ENCODE measurements at regions of chr14 and their contacts with region 1.

Region 1: DNA sequence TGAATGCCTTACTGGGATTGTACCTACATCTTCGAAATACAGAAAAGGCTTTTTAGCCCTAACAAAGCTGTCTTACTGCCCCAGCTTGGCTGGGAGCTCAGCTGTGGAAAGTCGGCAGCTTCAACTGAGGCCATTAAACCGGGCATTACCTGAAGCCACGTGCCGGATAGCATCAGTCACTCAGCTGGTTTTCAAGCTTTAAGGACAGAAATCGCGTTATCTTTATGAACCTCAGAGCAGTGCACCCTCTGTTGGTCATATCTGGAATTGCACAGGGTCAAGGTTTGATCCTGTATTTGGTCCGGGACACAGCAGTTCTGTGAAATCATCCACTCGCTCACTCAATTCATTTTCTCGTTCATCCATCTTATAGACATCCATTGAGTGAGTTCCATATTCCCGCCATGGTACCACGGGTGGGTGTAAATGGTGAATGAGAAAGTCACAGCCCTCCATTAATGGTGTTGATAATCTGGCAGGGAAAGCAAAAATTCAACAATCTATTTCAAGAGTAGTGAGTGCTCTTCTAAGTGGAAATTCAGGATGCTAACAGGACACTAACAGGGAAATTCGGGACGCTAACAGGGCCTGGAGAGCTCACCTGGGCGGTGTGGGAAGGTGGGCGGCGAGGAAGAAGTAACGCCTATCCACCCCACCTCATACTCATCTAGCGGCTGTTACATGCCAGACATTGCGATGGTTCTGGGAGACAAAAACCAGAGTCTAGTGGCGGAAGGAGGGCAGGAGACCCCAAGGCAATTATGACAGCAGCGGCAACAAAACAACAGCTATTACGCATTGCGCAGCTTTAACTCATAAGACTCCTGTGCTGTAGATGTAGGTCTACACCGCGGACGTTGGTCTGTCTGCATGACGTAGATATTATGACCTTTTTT is 60.6 kb upstream of the TCL1A start:
- DNase-seq: peak; percentile 47 to 63 (median 58)
- ATAC-seq: peak; percentile 55; the same call in 2 of the 3 replicates
- H3K4me3 ChIP-seq: no peak overlapping the region
- H3K27ac ChIP-seq: no peak overlapping the region
- H3K4me1 ChIP-seq: no peaks in the 10 kb centered on the region; a peak in 1 of 5 replicates
- H3K27me3 ChIP-seq: no peaks in the 10 kb centered on the region
- CTCF ChIP-seq: peak; percentile 63 to 73 (median 69)
- EP300 ChIP-seq: no peak
- POLR2A ChIP-seq: no peak
- RAD21 ChIP-seq: peak; percentile 27 to 54; a peak in 3 of 4 replicates

Region 2: DNA sequence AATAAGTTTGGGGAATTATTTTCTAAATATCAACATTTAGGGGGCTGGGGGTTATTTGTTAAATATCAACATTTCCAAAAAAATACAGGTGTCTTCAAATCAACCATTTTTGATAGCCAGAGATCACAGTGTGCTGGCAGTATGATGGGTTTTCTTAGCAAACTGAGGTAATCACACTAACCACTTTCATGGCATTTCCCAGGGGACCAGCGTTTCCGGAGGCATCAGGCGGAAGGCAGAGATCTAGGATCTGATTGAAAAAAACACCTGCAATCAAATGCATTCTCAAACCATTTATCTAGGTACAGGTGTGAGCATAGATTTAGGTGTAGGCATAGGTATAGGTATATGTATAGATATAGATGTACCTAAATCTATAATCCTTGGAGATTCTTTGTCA is 205.1 kb before region 1 on chr14:
- CTCF ChIA-PET with region 1: interaction called, 3 read pairs
- POLR2A ChIA-PET with region 1: no interaction called
- in situ Hi-C with region 1: loop called (anchors 5 kb)
- intact Hi-C with region 1: no loop called
- DNase-seq: no peak
- ATAC-seq: no peak
- H3K4me3 ChIP-seq: no peak overlapping the region
- H3K27ac ChIP-seq: no peak overlapping the region
- H3K4me1 ChIP-seq: no peaks in the 10 kb centered on the region
- H3K27me3 ChIP-seq: no peaks in the 10 kb centered on the region
- CTCF ChIP-seq: no peak
- EP300 ChIP-seq: no peak
- POLR2A ChIP-seq: no peak
- RAD21 ChIP-seq: no peak

Region 3: DNA sequence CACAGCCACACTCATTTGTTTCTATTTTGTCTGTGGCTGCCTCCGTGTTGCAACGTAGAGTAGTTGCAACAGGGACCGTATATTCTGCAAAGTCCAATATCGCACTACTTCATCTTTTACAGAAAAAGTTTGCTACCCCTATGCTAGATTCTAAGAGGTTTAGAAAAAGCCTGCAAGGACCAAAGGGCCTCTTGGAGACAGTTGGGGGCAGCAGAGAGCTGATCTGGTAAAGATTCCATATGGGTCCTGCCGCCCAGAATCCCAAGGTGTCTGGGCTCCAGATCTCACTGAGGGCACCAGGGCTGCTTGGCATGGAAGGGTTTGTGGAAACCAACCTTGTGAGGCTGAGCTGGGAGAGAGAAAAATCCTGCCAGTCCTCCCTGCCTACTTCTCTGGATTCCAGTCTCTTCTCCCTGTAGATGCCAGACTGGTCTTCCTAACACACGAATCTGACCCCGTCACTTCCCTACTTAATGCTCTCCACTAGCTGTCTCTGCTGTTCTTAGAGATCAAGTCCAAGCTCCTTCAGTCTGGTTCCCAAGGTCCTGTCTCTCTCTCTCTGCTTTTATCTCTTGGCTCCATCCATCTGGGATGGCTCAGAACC is 165.0 kb before region 1 on chr14:
- CTCF ChIA-PET with region 1: interaction called, 3 read pairs
- POLR2A ChIA-PET with region 1: no interaction called
- in situ Hi-C with region 1: no loop called
- intact Hi-C with region 1: loop called (anchors 5 kb)
- DNase-seq: peak; percentile 14 to 44 (median 18)
- ATAC-seq: peak; percentile 76
- H3K4me3 ChIP-seq: no peak overlapping the region
- H3K27ac ChIP-seq: no peak overlapping the region
- H3K4me1 ChIP-seq: no peaks in the 10 kb centered on the region
- H3K27me3 ChIP-seq: peaks cover 9 to 13% of the 10 kb centered on the region in 2 experiments; a peak in 4 of 5 replicates
- CTCF ChIP-seq: peak; percentile 47 to 68 (median 62)
- EP300 ChIP-seq: no peak
- POLR2A ChIP-seq: no peak
- RAD21 ChIP-seq: peak; percentile 41 to 61

Measured in K562 (cell line).